Dorsolateral prefrontal cortex (tissue), 120 donors: ENCODE measurements at regions of chr6 and their contacts with region 1.

Region 1: DNA sequence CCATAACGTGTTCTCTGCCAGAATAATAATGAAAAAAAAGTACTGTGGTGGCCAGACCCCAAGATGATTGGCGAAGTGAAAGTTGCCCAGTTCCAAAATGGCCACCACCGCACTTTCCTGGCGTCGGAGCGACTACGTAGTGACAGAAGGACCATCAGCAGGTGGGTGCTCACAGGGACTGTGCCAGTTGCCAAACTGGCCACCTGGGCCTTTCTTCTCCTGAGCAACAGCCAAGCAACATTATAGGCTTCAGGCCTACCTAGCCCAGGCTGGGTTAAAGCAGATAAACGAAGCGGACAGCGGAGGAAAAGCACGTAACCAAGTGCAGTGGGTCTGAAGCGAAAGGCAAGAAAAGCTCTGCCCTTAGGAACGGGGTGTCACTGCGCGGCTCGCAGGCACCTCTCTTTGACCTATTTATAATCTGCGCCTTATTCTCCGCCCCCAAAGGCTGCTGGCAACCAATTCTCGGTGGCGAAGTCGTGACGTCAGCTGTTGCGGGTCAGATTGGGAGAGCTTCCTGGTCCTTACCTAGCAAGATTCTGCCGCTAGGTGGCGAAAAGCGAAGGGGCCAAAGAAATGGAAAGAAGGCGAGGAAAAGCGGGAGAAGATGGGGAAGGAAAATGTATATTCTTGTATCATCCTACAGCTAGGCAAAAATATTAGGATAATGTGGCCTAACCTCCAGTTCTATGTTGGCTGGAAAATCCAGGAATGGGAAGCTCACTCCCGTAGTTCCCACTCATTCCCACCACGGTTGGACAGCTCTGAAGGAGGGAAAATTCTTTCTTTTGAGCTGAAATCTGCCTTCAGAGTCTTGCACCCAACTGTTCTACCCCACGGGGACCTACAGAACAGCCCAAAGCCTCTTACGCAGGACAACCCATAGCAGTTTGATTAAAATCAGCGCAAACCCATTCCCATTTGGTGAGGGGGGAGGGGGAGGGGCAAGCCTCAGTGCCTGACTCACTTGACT is 6.9 kb upstream of the MOG start:
- DNase-seq: peak; percentile 97 to 100 (median 98)
- H3K4me3 ChIP-seq: peak overlapping the region; percentile 41 to 87 (median 68)
- H3K27ac ChIP-seq: peak overlapping the region; percentile 55 to 99 (median 94)
- H3K27me3 ChIP-seq: peaks cover 0 to 4% (median 0%) of the 10 kb centered on the region in 45 donors
- CTCF ChIP-seq: peak; percentile 85 to 98 (median 94)

Region 2: GRCh38 chr6:29236060-29236459 is 413.9 kb before region 1 on chr6:
- intact Hi-C with region 1: no loop called
- DNase-seq: no peak
- H3K4me3 ChIP-seq: no peak overlapping the region
- H3K27ac ChIP-seq: no peak overlapping the region
- H3K27me3 ChIP-seq: peaks cover 0 to 4% (median 0%) of the 10 kb centered on the region in 45 donors
- CTCF ChIP-seq: no peak

Region 3: DNA sequence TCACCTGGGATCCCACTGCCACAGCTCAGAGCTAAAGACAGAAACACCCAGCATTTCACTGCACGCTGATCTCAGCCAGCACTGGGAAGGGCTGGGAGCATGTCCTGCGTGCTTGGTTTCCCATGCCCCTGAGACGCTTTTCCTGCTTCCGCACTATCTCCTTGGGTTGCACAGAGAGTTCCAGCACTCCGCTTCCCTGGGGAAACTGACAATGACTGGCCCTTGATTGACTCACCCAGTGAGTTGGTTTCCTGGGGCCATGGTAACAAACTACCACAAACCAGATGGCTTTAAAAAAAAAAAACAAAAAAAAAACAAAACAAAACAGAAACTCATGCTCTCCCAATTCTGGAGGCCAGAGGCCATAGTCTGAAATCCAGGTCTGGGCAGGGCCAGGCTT is 147.4 kb before region 1 on chr6:
- intact Hi-C with region 1: no loop called
- DNase-seq: no peak
- H3K4me3 ChIP-seq: no peak overlapping the region
- H3K27ac ChIP-seq: no peak overlapping the region
- H3K27me3 ChIP-seq: peaks cover 0 to 40% (median 7%) of the 10 kb centered on the region in 45 donors
- CTCF ChIP-seq: no peak

Region 4: GRCh38 chr6:29685718-29686326 is 35.8 kb after region 1 on chr6:
- intact Hi-C with region 1: loop called in 1 of 2 experiments (anchors 1 kb)
- DNase-seq: peak in 3 of 10 donors; percentile 43 to 74 (median 54)
- H3K4me3 ChIP-seq: no peak overlapping the region
- H3K27ac ChIP-seq: no peak overlapping the region
- H3K27me3 ChIP-seq: peaks cover 0 to 8% (median 0%) of the 10 kb centered on the region in 45 donors
- CTCF ChIP-seq: peak in 46 of 56 donors; percentile 16 to 77 (median 46)

Region 5: DNA sequence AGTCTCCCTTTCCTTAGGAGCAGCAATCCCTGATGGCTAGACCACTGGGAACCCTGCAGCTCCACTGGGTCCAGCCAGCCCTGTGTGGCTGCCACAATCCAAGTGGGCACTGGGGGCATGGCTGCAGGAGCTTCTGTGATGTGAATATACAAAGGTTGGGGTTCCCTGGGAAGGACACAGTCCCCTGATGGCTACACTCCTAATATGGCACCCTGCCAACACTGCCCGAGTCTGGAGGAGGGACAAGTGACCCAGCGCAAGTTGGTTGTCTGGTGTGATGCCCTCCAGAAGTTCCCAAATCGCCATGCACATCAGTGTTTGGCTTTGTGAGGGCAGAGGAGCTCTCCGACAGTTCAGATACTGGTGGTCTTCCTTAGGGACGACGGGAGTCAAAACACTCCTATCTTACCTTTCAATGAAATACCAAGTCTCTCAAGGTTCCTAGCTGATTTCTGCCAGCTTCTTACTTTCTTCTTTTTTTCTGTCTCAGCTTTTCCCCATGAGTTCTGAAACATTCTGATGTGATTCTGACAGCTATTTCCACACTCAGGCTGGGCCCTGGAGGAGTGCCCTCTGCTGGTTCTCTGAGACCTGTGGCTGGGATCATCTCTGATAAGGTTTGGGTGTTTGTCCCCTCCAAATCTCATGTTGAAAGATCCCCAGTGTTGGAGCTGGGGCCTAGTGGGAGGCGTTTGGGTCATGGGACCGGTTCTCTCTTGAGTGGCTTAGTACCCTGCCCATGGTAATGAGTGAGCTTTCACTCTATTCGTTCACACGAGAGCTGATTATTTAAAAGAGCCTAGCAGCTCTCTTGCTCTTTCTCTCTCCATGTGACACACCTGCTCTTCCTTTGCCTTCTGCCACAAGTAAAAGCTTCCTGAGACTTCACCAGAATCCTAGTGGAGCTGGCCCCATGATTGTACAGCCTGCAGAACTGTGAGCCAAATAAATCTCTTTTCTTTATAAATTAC is 46.5 kb after region 1 on chr6:
- intact Hi-C with region 1: loop called (anchors 2 to 5 kb)
- DNase-seq: peak in 6 of 10 donors; percentile 12 to 58 (median 38)
- H3K4me3 ChIP-seq: no peak overlapping the region
- H3K27ac ChIP-seq: no peak overlapping the region
- H3K27me3 ChIP-seq: no peaks in the 10 kb centered on the region
- CTCF ChIP-seq: peak in 51 of 56 donors; percentile 14 to 72 (median 49)

Region 6: GRCh38 chr6:29834564-29835436 is 184.8 kb after region 1 on chr6:
- intact Hi-C with region 1: loop called (anchors 5 to 10 kb)
- DNase-seq: peak in 2 of 10 donors; percentile 36 to 48
- H3K4me3 ChIP-seq: peak overlapping the region in 1 of 59 donors; percentile 12
- H3K27ac ChIP-seq: no peak overlapping the region
- H3K27me3 ChIP-seq: peaks cover 0 to 72% (median 20%) of the 10 kb centered on the region in 45 donors
- CTCF ChIP-seq: peak; percentile 52 to 94 (median 84)

Region 7: GRCh38 chr6:30066577-30067459 is 416.8 kb after region 1 on chr6 and contains the start of gene PPP1R11:
- intact Hi-C with region 1: loop called in 1 of 2 experiments (anchors 10 kb)
- DNase-seq: peak; percentile 97 to 99 (median 98)
- H3K4me3 ChIP-seq: peak within 1 kb of the TSS; percentile 53 to 98 (median 82)
- H3K27ac ChIP-seq: peak within 1 kb of the TSS; percentile 69 to 95 (median 90)
- H3K27me3 ChIP-seq: peaks cover 0 to 14% (median 0%) of the 10 kb centered on the region in 45 donors
- CTCF ChIP-seq: peak in 24 of 56 donors; percentile 0 to 55 (median 26)
- total RNA-seq, gene PPP1R11: 44.4 to 86.3 (median 63.9) TPM